ENCODE measurements at regions of chr9 and their contacts with region 1.

Region 1: DNA sequence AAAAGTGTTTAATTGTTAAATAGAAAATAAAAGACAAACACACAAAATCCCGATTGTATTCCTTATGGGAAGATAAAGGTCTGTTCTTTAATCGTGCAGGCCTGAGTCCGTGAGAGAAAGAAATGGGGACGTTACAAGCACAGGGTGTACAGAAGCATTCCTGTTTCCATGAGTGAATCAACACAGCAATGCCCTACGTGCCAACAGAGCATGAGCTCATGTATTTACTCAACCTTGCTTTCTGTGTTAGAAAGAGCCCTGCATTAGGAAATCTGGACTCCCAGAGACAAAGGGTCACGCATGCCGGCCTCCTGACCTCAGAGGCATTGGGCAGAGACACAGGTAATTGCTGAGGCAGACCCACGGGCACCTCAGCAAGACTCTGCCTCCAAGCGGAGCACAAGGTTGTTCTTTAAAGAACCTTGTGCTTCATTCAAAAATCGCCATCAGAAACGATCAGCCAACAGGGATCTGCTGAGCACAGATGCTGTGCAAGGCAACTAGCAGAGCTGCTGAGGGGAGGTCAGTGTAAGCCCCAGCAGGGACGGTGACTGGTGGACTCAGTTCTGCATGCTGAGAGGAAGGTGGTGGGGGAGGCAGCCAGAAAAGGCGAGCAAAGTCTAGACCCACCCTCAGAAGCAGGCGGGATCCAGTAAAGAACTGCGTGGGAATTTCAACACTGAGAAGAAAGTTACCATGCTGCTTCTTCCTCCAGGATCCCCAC is 101.0 kb downstream of the TLE1 start:
- DNase-seq: peak; percentile 91
- H3K4me3 Mint-ChIP-seq: peak overlapping the region; percentile 66
- H3K27ac Mint-ChIP-seq: peak overlapping the region; percentile 98
- H3K4me1 Mint-ChIP-seq: peaks cover 25% of the 10 kb centered on the region
- H3K27me3 Mint-ChIP-seq: no peaks in the 10 kb centered on the region
- CTCF ChIP-seq: no peak

Region 2: GRCh38 chr9:81562231-81563019 is 25.9 kb before region 1 on chr9:
- CTCF ChIA-PET with region 1: interaction called, 3 read pairs
- POLR2A ChIA-PET with region 1: no interaction called
- intact Hi-C with region 1: loop called (anchors 2 kb)
- DNase-seq: peak; percentile 96
- H3K4me3 Mint-ChIP-seq: no peak overlapping the region
- H3K27ac Mint-ChIP-seq: peak overlapping the region; percentile 29
- H3K4me1 Mint-ChIP-seq: peaks cover 45% of the 10 kb centered on the region
- H3K27me3 Mint-ChIP-seq: no peaks in the 10 kb centered on the region
- CTCF ChIP-seq: no peak

Measured in MCF 10A (cell line).